ENCODE measurements at regions of chr13 and their contacts with region 1.

Region 1: GRCh38 chr13:94549232-94550061 is 46.5 kb downstream of the TGDS start:
- DNase-seq: peak; percentile 99

Region 2: DNA sequence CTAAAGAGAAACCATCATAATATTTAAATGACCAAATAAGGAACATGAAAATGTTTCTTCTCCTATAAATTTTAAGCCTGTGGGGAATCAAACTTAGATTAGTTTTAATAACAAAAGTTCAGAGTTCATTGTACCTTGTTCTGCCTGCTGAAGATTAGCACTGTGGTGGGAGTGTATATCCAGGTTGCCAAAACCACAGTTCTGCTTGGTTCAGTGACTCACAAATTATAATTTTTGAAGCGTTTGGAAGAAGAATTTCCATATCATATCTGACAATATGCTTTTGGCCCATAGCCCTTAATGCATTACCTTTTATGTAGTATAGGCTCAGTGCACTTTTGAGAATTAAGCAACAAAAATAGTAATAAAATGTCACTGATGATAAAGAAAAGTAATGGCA is 777.7 kb before region 1 on chr13:
- CTCF ChIA-PET with region 1: no interaction called
- POLR2A ChIA-PET with region 1: no interaction called
- DNase-seq: no peak

Region 3: DNA sequence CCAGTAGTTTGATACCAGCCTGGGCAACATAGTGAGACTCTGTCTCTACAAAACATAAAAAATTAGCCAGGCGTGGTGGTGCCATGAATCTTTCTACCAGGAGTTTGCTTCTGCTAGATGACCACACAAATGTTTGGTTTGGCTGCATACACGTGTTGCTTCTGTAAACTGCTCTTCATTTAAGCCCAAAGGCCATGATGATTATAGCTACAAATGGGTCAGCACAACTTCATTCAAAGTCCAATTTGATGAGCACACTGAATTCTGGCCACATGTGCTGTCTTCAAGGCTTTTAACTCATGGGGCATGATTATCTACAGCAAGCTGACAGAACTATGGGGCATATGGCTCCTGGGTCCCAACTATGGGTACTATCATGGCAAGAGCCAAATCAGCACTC is 23.7 kb before region 1 on chr13:
- CTCF ChIA-PET with region 1: interaction called, 3 read pairs
- POLR2A ChIA-PET with region 1: interaction called, 12 read pairs
- DNase-seq: no peak

Region 4: DNA sequence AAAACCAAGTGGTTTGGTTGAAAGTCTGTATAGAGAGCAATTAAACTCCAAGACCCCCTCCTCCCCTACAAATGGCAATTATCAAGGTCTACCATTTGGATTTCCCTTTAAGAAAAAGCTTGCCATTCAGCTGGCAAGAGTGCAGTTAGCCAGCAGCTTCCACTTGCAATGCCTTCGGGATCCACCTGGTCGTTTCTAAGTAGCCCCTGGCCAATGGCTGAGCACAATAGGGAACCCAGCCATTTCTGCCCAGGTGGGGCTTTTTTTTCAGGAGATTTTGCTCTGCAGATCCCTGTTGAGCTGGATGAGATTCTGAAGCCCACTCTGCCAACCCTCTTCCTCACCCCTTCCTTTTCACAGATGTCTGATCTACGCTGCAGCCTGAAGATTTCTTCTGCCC is 20.2 kb after region 1 on chr13:
- CTCF ChIA-PET with region 1: interaction called, 4 read pairs
- POLR2A ChIA-PET with region 1: interaction called, 16 read pairs
- DNase-seq: no peak

Region 5: GRCh38 chr13:94601446-94602431 is 52.3 kb after region 1 on chr13 and contains the start of gene GPR180:
- CTCF ChIA-PET with region 1: interaction called, 5 read pairs
- POLR2A ChIA-PET with region 1: interaction called, 66 read pairs
- DNase-seq: peak; percentile 100

Region 6: GRCh38 chr13:94692030-94692429 is 142.6 kb after region 1 on chr13:
- CTCF ChIA-PET with region 1: no interaction called
- POLR2A ChIA-PET with region 1: no interaction called
- DNase-seq: no peak